Lower leg skin (tissue), 4 donors: ENCODE measurements at regions of chr2 and their contacts with region 1.

Region 1: DNA sequence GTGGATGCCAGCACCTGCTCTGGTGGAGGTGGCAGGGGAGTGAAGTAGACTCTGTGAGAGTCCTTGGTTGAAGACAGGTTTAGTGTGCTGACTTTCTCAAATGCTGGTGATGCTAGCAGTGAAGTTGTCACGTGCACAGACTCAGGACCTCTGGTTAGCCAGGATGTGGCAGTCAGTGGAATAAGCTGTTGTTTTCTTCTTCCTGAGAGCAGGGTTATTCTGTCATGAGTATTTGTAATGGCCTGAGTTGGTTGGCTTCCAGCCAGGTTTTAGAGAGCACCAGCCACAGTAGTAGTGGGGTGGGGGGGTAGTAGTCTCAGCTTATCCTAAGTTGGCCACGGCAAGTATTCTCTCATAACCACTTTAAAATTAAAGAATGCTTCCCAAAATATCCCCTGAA is 238.5 kb upstream of the FBXO11 start:
- DNase-seq: no peak
- H3K4me3 ChIP-seq: no peak overlapping the region
- CTCF ChIP-seq: no peak
- POLR2A ChIP-seq: no peak

Region 2: DNA sequence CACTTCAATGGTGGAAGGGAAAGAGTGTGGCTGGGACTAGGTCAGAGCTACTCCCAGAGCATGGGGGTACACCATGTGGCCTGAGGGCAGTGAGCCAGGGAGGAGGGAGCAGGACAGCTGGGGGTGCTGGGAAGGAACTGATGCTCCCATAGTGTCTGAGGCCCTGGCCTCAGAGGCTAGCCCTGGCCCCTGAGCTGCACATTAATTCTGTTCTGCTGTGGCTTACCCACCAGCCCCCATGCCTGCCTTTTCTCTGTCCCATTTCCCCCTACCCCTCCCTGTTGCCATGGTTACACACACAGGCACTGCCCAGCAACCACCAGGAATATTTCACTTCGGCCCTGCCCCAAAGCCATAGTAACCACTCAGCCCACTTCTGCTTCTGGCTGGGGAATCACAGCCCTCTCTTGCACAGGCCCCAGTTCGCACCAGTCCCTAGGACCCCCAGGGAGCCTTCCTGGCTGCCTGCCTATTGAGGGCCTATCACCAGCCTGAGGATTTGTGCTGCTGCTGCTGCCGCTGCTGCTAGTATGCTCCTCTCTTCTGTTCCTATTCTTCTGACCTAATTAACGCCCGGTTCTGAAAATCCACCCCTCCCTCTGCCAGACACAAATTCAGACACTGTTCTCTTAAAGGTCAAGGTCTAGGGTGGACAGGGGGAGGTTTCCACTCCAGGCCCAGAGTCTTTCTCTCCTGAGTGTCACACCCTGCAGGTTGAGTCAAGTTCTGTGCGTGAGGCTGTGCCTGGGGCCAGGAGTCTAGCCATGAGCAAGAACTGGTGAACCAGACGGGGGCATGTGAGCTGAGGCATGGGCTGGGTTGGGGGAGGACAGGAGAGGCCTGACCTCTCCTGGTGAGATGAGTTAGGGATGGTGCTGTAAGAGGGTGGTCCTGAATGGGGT is 1142.0 kb before region 1 on chr2:
- intact Hi-C with region 1: loop called (anchors 5 kb)
- DNase-seq: peak in 1 of 2 donors; percentile 39
- H3K4me3 ChIP-seq: no peak overlapping the region
- CTCF ChIP-seq: no peak
- POLR2A ChIP-seq: no peak